Activated CD4-positive, alpha-beta memory T cell treated with anti-CD3 and anti-CD28 coated beads, Interleukin-2, amount 10 ng/mL, durations not matched to agents 7 days and 5 days (primary cell): ENCODE measurements at regions of chrX and their contacts with region 1.

Region 1: DNA sequence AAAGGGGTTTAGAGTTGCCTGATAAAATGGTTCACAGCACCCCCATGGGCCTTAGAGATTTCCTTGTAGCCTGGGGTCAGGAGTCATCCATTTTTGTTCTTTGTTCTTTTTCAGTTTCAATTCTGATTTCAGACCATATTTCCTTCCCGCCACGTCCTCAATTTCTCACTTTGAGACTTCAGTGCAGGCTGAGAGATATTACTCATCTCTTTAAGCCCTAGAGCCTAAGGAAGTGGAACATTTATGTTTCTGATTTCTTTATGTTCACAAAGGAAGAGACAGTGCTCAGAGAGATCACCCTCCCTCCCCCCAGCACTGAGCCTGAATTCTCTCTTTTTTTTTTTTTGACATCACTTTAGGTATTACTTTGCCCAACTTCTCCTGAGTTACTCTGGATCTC is 56.3 kb downstream of the MSN start:
- DNase-seq: peak; percentile 48
- H3K4me3 Mint-ChIP-seq: peak overlapping the region; percentile 49
- H3K27ac Mint-ChIP-seq: peak overlapping the region; percentile 94
- H3K4me1 Mint-ChIP-seq: peaks cover 91% of the 10 kb centered on the region
- H3K27me3 Mint-ChIP-seq: no peaks in the 10 kb centered on the region

Region 2: GRCh38 chrX:65674204-65674893 is 49.4 kb before region 1 on chrX:
- CTCF ChIA-PET with region 1: interaction called, 11 read pairs
- POLR2A ChIA-PET with region 1: interaction called, 18 read pairs
- DNase-seq: peak; percentile 34
- H3K4me3 Mint-ChIP-seq: peak overlapping the region; percentile 91
- H3K27ac Mint-ChIP-seq: peak overlapping the region; percentile 83
- H3K4me1 Mint-ChIP-seq: peaks cover 73% of the 10 kb centered on the region
- H3K27me3 Mint-ChIP-seq: no peaks in the 10 kb centered on the region

Region 3: DNA sequence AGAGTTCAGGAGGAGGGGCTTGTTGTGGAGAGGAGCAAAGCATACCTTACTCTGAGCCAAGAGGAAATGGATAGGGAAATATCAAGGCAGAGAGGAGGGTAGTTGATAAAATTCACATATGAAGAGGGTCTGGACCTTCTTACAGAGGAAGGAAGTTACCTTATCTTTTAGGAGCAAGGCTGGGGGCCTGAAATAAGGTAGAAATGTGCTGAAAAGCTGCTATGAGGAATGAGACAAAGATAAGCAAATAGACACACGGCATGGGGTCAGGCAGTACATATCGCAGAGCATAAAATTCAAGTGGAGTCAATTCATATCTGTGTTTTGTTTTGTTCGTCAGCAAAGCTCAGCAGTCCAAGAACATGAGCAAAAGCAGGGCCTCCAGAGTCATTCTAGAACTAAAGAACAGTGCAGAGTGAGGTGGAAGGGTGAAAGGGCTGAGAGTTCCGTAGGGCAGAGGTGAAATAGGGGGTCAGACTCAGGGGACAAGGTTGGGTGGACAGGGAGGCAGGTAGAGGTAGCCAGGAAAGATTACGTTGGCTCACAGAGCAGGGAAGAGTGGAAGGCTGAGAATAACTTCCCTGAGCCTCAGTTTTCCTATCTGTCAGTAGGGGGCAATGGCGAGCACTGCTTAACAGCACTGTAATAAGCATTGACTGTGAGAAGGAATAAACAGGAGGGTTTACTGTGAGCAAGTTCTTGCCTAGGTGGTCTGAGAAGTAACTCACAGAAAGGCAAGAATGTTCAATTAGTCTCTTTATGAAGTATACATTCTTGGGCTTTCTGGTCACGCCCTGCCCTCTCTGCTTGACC is 307.0 kb after region 1 on chrX:
- CTCF ChIA-PET with region 1: no interaction called
- POLR2A ChIA-PET with region 1: no interaction called
- DNase-seq: no peak
- H3K4me3 Mint-ChIP-seq: no peak overlapping the region
- H3K27ac Mint-ChIP-seq: no peak overlapping the region
- H3K4me1 Mint-ChIP-seq: peaks cover 2% of the 10 kb centered on the region
- H3K27me3 Mint-ChIP-seq: no peaks in the 10 kb centered on the region